GM10248 (cell line): ENCODE measurements at regions of chr20 and their contacts with region 1.

Region 1: GRCh38 chr20:8401556-8401955 is 269.5 kb downstream of the PLCB1 start:
- DNase-seq: no peak
- CTCF ChIP-seq: no peak

Region 2: GRCh38 chr20:8346700-8347270 is 54.8 kb before region 1 on chr20:
- CTCF ChIA-PET with region 1: no interaction called
- POLR2A ChIA-PET with region 1: no interaction called
- DNase-seq: no peak
- CTCF ChIP-seq: no peak

Region 3: DNA sequence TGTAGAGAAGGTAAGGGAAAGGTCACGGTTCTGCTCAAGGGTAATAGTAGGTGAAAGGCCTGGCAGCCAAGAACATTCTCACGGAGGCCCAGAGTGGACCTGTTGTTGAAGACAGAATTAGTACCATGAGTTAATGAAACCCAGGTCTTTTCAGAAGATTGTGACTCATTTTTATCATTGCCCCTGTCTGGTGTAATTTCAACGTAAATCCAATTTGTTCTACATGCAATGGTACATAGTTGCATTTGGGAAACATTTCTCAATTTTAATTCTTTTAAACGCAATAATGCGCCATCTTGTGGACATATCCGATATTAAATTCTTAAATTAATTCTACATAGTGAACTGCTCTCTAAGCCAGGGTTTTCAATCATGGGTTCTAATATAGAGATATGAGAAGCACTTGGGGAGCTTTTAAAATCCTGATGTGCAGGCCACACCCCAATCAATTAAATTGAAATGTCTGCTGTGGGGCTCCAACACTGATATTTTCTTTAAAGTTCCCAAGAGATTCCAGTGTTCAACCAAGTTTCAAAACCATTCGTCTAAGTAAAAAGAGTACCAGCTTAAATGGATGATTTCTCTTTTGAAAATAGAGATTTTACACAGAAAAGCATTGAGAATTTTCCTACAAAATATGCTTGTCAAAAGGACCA is 12.0 kb before region 1 on chr20:
- CTCF ChIA-PET with region 1: interaction called, 10 read pairs
- POLR2A ChIA-PET with region 1: no interaction called
- DNase-seq: peak; percentile 11
- CTCF ChIP-seq: no peak

Region 4: DNA sequence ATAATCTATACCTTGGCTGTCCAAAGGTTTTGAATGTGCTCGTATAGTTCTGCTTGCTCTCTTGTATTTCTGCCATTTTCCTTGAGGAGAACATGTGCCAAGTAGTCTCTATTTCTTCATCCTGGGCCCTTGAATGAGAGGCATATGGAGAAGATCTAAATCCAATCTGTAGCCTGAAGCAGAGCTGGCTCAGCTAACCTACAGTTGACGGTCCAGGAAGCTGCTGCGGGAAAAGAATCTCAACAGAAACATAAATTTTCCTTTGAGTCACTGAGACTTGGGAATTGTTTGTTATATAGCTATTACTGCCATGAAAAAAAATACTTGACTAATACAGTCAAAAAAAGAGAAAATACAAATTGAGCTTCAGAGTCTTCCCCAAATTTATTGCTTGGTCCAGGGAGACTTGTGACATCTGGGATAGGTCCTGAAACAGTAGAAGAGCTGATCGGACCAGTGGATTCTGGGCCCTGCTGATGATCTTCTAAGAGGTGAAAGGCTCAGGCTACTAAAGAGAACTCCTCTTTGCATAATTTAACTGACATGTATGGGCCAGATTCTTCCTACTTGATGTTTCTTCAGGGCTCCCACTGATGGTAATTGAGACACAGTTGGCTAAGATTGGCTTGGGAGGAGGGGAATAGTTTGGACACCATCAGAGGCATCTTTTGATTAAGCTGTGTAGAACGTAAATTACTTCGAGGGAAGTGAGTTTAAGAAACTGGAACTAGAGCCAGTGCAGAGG is 637.4 kb after region 1 on chr20:
- CTCF ChIA-PET with region 1: no interaction called
- POLR2A ChIA-PET with region 1: no interaction called
- DNase-seq: no peak
- CTCF ChIP-seq: no peak